ENCODE measurements at regions of chr20 and their contacts with region 1.

Region 1: GRCh38 chr20:63707549-63708300 is at the starts of genes ARFRP1 and ZGPAT:
- DNase-seq: peak; percentile 16
- H3K4me3 ChIP-seq: peak within 1 kb of the TSS; percentile 81
- H3K27ac ChIP-seq: no peak within 1 kb of the TSS
- H3K27me3 ChIP-seq: no peaks in the 10 kb centered on the region
- CTCF ChIP-seq: no peak
- polyA plus RNA-seq, gene ARFRP1: 21.4 and 23.8 TPM in 2 replicates
- polyA plus RNA-seq, gene ZGPAT: 8.7 and 10.6 TPM in 2 replicates

Region 2: GRCh38 chr20:63740627-63741354 is 33.1 kb after region 1 on chr20:
- CTCF ChIA-PET with region 1: no interaction called
- POLR2A ChIA-PET with region 1: interaction called, 15 read pairs
- DNase-seq: peak; percentile 63
- H3K4me3 ChIP-seq: peak overlapping the region; percentile 74
- H3K27ac ChIP-seq: peak overlapping the region; percentile 61
- H3K27me3 ChIP-seq: no peaks in the 10 kb centered on the region
- CTCF ChIP-seq: peak; percentile 33; the same call in 1 of the 2 replicates

Region 3: DNA sequence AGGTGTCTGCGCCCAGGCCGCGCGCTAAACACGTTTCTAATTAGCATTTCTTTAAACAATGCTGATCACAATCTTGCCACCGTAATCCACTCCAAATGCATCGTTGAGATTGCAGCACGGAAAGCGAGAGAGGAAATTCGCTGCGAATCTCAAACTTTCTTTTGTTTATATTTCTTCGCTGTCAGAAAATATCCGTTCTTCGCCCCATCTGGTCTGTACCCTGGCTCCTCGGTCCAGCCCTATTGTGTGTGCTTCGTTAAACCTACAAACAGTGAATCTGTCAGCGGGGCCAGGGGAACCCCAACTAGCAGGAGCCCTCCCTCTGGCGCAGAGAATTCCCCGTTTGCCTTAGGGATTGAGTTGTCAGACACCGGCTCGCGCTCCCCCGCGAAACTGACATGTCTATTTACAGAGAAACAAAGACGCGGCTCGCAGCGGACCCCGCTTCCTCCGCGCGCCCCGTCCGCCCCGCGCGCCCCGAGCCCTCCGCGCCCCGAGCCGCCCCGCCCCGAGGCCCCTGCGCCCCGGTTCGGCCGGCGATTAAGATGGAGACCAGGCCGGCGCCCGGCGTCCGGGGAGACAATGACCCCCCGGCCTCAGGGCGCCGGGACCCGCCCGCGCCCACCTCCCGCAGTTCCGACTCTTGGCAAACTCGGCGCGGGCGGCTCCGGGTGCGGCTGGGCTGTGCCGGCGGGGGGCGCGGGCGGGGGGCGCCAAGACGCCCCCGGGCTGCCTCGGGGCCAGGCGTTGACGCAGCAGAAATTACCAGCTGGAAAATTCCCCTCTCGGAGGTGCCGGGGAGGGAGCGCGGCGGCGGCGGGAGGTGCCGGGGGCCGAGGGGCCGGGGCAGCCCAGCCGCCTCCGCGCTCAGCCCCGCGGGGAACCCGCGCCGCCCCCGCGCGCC is 122.5 kb after region 1 on chr20:
- CTCF ChIA-PET with region 1: no interaction called
- POLR2A ChIA-PET with region 1: no interaction called
- DNase-seq: no peak
- H3K4me3 ChIP-seq: peak overlapping the region; percentile 74
- H3K27ac ChIP-seq: peak overlapping the region; percentile 21
- H3K27me3 ChIP-seq: no peaks in the 10 kb centered on the region
- CTCF ChIP-seq: no peak